ENCODE measurements at regions of chr20 and their contacts with region 1.

Region 1: DNA sequence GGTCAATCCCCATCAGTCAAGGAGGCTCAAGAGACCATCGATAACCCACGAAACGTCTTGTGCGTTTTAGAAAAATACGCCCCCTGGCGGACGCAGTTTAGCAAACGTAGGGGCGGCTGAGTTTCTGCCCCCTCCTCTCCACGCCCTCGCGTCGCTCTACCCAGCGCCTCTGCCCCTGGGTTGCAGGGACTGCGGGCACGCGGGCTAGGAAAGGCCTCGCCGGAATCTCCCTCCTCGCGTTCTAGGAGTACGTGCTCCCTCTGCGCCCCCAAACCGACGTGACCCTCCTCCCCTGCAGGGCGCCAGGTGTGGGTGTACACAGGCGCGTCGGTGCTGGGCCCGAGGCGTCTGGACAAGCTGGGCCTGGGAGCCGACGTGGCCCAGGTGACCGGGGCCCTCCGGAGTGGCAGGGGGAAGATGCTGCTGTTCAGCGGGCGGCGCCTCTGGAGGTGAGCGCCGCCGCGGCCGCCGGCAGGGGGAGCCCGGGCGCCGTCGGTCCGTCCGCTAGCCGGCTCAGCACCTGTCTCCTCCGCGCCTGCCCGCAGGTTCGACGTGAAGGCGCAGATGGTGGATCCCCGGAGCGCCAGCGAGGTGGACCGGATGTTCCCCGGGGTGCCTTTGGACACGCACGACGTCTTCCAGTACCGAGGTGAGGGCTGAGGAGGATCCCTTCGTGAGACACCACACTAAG is 5.3 kb downstream of the MMP9 start:
- DNase-seq: peak; percentile 73
- ATAC-seq: peak; percentile 90
- H3K4me3 Mint-ChIP-seq: peak overlapping the region; percentile 16
- H3K27ac Mint-ChIP-seq: peak overlapping the region; percentile 53
- H3K4me1 Mint-ChIP-seq: peaks cover 47% of the 10 kb centered on the region
- H3K27me3 Mint-ChIP-seq: peaks cover 47% of the 10 kb centered on the region
- CTCF ChIP-seq: peak; percentile 44

Region 2: GRCh38 chr20:45823949-45824835 is 189.8 kb before region 1 on chr20:
- CTCF ChIA-PET with region 1: no interaction called
- POLR2A ChIA-PET with region 1: no interaction called
- intact Hi-C with region 1: loop called (anchors 5 kb)
- DNase-seq: peak; percentile 48
- ATAC-seq: peak; percentile 85
- H3K4me3 Mint-ChIP-seq: peak overlapping the region; percentile 82
- H3K27ac Mint-ChIP-seq: peak overlapping the region; percentile 60
- H3K4me1 Mint-ChIP-seq: peaks cover 26% of the 10 kb centered on the region
- H3K27me3 Mint-ChIP-seq: peaks cover 18% of the 10 kb centered on the region
- CTCF ChIP-seq: no peak

Region 3: GRCh38 chr20:45987108-45987780 is 26.7 kb before region 1 on chr20:
- CTCF ChIA-PET with region 1: interaction called, 54 read pairs
- POLR2A ChIA-PET with region 1: interaction called, 3 read pairs
- intact Hi-C with region 1: loop called (anchors 1 kb)
- DNase-seq: peak; percentile 70
- ATAC-seq: peak; percentile 97
- H3K4me3 Mint-ChIP-seq: no peak overlapping the region
- H3K27ac Mint-ChIP-seq: no peak overlapping the region
- H3K4me1 Mint-ChIP-seq: peaks cover 5% of the 10 kb centered on the region
- H3K27me3 Mint-ChIP-seq: peaks cover 13% of the 10 kb centered on the region
- CTCF ChIP-seq: no peak

Region 4: GRCh38 chr20:46057856-46058598 is 44.1 kb after region 1 on chr20:
- CTCF ChIA-PET with region 1: no interaction called
- POLR2A ChIA-PET with region 1: no interaction called
- intact Hi-C with region 1: loop called (anchors 5 kb)
- DNase-seq: no peak
- ATAC-seq: peak; percentile 48
- H3K4me3 Mint-ChIP-seq: peak overlapping the region; percentile 56
- H3K27ac Mint-ChIP-seq: no peak overlapping the region
- H3K4me1 Mint-ChIP-seq: peaks cover 41% of the 10 kb centered on the region
- H3K27me3 Mint-ChIP-seq: peaks cover 29% of the 10 kb centered on the region
- CTCF ChIP-seq: no peak

Region 5: DNA sequence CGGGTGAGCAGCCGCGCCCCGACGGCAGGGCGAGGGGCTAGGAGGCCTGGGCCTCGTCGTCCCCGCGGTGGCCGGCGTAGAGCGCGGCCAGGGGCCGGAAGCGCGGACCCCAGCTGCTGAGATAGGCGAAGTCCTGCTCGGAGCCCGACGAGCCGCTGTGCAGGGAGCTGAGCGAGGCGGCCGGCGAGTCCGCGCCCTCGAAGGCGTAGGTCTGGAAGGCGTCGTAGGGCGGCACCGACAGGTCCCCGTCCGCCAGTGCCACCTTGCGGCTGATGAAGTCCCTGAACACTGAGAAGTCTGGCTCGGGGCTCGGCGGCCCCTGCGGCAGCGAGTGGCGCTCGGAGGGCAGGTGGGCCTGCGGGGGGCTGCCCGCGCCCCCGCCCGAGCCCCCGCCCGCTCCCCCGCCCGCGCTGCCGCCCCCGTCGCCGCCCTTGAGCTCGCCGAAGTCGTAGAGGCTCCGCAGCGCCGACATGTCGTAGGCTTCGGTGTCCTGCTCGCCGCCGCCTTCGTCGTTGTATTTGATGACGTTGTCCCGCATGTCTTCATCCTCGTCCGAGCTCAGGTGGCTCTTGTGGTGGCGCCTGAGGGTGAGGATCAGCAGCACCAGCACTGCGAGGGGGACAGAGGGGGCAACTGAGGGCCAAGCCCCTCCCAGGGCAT is 160.6 kb after region 1 on chr20:
- CTCF ChIA-PET with region 1: interaction called, 39 read pairs
- POLR2A ChIA-PET with region 1: no interaction called
- intact Hi-C with region 1: loop called (anchors 1 kb)
- DNase-seq: peak; percentile 69
- ATAC-seq: peak; percentile 97
- H3K4me3 Mint-ChIP-seq: no peak overlapping the region
- H3K27ac Mint-ChIP-seq: no peak overlapping the region
- H3K4me1 Mint-ChIP-seq: no peaks in the 10 kb centered on the region
- H3K27me3 Mint-ChIP-seq: peaks cover 49% of the 10 kb centered on the region
- CTCF ChIP-seq: no peak

Region 6: GRCh38 chr20:46206025-46206424 is 192.1 kb after region 1 on chr20:
- CTCF ChIA-PET with region 1: no interaction called
- POLR2A ChIA-PET with region 1: no interaction called
- intact Hi-C with region 1: no loop called
- DNase-seq: no peak
- ATAC-seq: peak; percentile 18
- H3K4me3 Mint-ChIP-seq: no peak overlapping the region
- H3K27ac Mint-ChIP-seq: no peak overlapping the region
- H3K4me1 Mint-ChIP-seq: peaks cover 13% of the 10 kb centered on the region
- H3K27me3 Mint-ChIP-seq: peaks cover 36% of the 10 kb centered on the region
- CTCF ChIP-seq: no peak

Region 7: GRCh38 chr20:46375771-46376170 is 361.8 kb after region 1 on chr20:
- CTCF ChIA-PET with region 1: no interaction called
- POLR2A ChIA-PET with region 1: no interaction called
- intact Hi-C with region 1: no loop called
- DNase-seq: no peak
- ATAC-seq: no peak
- H3K4me3 Mint-ChIP-seq: no peak overlapping the region
- H3K27ac Mint-ChIP-seq: no peak overlapping the region
- H3K4me1 Mint-ChIP-seq: no peaks in the 10 kb centered on the region
- H3K27me3 Mint-ChIP-seq: no peaks in the 10 kb centered on the region
- CTCF ChIP-seq: no peak

Region 8: DNA sequence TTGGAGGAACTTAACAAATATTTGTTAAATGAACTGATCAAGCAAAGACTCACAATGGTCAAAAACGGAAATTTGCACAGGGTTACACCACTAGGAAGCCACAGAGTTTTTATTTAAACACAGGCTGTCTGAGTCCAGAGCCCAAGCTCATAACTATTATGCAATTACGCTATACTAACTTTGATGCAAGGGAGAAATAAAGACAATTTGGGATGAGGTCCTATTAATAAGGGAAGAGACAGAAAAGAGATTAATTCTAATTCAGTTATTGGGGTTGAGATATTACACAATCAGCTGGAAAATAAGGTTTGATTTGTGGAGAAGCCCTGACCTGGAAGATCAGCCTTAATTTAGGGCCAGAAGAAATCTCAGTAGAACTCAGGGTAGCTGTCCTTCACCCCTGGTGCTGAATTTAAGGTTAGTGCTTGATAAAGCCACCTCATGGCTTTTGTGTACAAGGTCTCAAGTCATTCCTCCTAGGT is 509.8 kb after region 1 on chr20:
- CTCF ChIA-PET with region 1: no interaction called
- POLR2A ChIA-PET with region 1: no interaction called
- intact Hi-C with region 1: no loop called
- DNase-seq: no peak
- ATAC-seq: no peak
- H3K4me3 Mint-ChIP-seq: no peak overlapping the region
- H3K27ac Mint-ChIP-seq: no peak overlapping the region
- H3K4me1 Mint-ChIP-seq: no peaks in the 10 kb centered on the region
- H3K27me3 Mint-ChIP-seq: peaks cover 18% of the 10 kb centered on the region
- CTCF ChIP-seq: no peak

Region 9: GRCh38 chr20:47170895-47171285 is 1156.9 kb after region 1 on chr20:
- CTCF ChIA-PET with region 1: no interaction called
- POLR2A ChIA-PET with region 1: no interaction called
- intact Hi-C with region 1: no loop called
- DNase-seq: no peak
- ATAC-seq: no peak
- H3K4me3 Mint-ChIP-seq: no peak overlapping the region
- H3K27ac Mint-ChIP-seq: no peak overlapping the region
- H3K4me1 Mint-ChIP-seq: no peaks in the 10 kb centered on the region
- H3K27me3 Mint-ChIP-seq: peaks cover 16% of the 10 kb centered on the region
- CTCF ChIP-seq: no peak

Measured in activated B cell treated with CpG ODN at 0.5 μM for 24 hours (primary cell).